ENCODE measurements at regions of chr1 and their contacts with region 1.

Region 1: GRCh38 chr1:214637722-214638458 is 34.9 kb downstream of the CENPF start:
- DNase-seq: no peak
- H3K4me3 ChIP-seq: no peak overlapping the region
- CTCF ChIP-seq: peak; percentile 57

Region 2: GRCh38 chr1:214213136-214213535 is 424.8 kb before region 1 on chr1:
- CTCF ChIA-PET with region 1: interaction called, 42 read pairs
- POLR2A ChIA-PET with region 1: no interaction called
- DNase-seq: no peak
- H3K4me3 ChIP-seq: no peak overlapping the region
- CTCF ChIP-seq: no peak

Region 3: DNA sequence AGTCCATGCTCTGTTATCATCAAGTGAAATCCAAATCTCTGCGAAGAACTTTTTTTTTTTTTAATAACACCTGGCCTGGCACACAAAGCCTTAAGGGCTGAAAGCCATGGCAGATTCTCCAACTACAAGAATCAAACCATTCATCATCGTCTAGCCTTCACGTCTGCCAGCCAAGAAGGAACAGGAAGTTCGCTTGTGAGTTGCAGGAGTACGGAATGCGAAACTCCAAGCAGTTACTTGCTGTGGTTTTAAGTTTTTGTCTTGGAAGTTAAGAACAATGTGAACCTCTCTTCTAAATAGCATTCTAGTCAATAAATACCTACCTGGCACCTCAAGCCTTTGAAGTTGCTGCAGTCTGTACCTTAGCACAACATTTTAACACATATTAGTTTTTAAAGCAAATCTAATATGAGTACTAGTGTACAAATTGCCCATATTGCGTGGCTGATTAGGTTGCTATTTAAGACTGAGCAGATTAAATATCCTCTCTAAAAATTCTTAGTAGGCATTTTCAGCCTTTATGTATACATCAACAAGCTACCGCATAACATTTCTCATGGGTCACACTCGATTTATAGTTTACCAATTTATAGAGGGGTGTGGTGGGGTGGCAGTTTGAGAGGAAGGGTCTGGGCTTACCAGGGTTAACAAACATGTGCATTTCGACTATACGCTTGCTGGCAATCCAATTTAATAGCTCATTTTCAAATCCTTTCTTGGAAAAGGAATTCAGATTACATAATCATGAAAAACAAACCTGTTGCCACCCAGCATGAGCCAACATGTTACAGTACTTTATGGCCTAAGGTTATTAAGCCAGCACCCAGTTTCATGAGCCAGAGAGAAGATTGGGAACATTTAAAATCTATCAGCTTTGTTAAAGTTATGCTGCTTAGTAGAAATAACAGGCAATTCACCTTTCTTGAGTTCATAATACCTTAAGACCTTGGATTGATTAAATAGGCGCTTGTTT is 64.2 kb before region 1 on chr1:
- CTCF ChIA-PET with region 1: no interaction called
- POLR2A ChIA-PET with region 1: no interaction called
- DNase-seq: no peak
- H3K4me3 ChIP-seq: no peak overlapping the region
- CTCF ChIP-seq: no peak

Region 4: GRCh38 chr1:214623430-214623829 is 14.5 kb before region 1 on chr1:
- CTCF ChIA-PET with region 1: interaction called, 118 read pairs
- POLR2A ChIA-PET with region 1: no interaction called
- DNase-seq: no peak
- H3K4me3 ChIP-seq: no peak overlapping the region
- CTCF ChIP-seq: no peak

Region 5: DNA sequence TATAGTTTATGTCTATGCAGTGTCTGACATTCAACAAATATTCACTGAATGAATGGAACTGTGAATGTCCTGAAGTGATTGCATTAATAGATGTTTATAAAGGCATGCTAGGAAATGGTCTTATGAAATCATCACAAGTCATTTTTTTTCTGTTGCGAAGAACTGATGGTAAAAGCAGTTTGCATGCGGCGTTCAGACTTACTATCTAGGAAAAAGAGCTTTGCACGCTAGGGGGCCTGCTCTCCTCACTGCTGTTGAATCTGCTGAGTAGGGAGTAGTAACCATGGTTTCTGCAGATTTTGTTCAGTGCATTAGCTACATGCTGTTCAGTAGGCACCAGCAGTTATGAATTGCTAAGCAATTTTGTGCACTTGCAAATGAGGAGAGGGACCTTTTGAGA is 23.0 kb after region 1 on chr1:
- CTCF ChIA-PET with region 1: interaction called, 14 read pairs
- POLR2A ChIA-PET with region 1: no interaction called
- DNase-seq: peak; percentile 70
- H3K4me3 ChIP-seq: no peak overlapping the region
- CTCF ChIP-seq: peak; percentile 85

Region 6: DNA sequence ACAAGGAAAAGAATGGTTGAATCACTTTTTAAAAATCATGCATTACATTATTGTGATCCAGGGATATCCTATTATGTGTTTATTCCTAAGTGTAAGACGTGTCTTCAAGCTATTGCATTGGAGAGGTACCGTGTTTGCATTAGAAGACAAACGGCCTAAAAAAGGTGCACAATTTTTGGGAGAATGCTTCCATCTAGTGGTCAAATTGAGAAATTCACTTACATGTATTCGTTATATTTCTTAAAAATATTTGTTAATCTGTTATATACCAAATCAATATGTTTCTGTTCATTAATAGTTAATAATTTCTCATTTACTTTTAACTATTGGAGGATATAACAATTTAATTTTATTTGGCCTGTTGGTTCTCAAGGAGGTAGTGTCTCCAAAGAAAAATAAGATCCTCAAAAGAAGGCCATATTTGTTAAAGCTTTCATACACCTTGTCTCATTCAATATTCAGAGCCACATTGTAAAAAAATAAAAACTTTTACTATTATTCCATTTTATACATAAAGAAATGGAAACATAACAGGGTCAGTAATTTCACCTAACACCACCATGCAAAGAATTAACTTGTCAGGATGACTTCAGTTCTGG is 888.8 kb after region 1 on chr1:
- CTCF ChIA-PET with region 1: interaction called, 147 read pairs
- POLR2A ChIA-PET with region 1: no interaction called
- DNase-seq: no peak
- H3K4me3 ChIP-seq: no peak overlapping the region
- CTCF ChIP-seq: peak; percentile 27

Measured in AG04449 (cell line).